GM18951 (cell line): ENCODE measurements at regions of chr10 and their contacts with region 1.

Region 1: GRCh38 chr10:12707461-12708185 is 293.9 kb downstream of the CCDC3 start:
- POLR2A ChIP-seq: no peak

Region 2: GRCh38 chr10:12252882-12253546 is 454.6 kb before region 1 on chr10:
- in situ Hi-C with region 1: loop called (anchors 10 kb)
- POLR2A ChIP-seq: no peak

Region 3: DNA sequence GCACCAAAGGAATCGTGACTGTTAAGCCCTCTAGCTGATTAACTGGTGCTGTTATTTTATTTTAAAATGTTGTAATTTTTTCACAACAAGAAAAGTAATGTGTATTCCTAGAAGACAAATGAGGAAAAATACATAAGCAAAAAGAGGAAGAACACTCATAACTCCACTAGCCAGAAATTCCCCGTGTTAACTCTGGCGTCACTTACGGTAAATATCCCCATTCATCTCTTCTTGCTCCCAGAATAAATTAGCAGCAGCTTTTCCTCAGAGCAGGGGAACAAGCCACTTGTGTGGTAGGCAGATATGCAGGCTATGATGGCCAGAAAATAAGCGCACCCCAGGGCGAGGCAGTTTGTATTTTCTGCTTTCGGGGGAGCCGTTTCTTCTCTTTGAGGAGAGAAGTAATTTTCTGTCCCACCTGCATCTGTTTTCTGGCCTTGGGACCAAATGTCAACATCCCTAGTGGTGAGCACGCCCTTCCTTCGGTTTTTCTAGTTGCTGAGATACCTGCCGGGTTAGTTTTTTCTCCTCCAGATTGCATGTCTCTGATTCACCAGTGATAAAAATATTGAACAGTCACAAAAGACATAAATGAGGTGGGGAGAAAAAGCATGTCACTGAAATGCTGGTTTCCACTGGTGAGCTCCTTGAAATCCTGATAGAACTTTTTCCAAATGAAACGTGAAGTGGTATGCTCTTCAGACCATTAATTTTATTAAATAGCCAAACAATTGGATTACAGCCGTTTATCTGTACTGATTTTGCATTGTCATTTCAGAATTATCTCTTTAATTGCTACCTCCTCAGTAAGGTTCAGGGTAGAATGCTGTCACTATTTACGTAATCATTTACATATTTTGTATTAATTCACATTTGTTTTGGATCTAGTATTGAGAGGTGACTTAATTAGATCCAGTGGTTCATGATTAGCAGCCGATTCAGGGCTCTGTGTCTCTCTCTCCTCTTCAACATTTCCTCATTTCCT is 90.1 kb before region 1 on chr10:
- in situ Hi-C with region 1: no loop called
- POLR2A ChIP-seq: no peak

Region 4: DNA sequence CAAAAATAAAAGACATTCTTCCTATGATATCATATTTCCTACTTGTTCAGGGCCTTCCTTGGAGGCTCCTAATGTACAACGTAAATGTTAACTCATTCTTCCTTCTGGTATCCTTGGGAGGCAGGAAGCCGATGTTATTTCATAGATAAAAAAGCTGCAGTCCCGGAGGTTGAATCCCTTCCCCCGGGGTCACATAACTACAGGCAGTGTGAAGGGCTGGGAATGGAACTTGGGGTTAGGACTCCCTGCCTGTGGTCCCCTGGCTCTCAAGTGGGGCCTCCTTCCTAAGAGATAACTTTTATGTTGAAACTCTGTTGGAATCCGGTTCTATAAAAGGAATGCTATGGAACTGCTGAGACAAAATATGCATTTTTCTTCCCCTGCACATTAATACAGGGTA is 308.8 kb after region 1 on chr10:
- in situ Hi-C with region 1: no loop called
- POLR2A ChIP-seq: no peak